ENCODE measurements at regions of chr5 and their contacts with region 1.

Region 1: GRCh38 chr5:14650052-14650451 is 14.5 kb upstream of the OTULIN start:
- DNase-seq: no peak
- H3K4me3 ChIP-seq: no peak overlapping the region
- CTCF ChIP-seq: no peak

Region 2: DNA sequence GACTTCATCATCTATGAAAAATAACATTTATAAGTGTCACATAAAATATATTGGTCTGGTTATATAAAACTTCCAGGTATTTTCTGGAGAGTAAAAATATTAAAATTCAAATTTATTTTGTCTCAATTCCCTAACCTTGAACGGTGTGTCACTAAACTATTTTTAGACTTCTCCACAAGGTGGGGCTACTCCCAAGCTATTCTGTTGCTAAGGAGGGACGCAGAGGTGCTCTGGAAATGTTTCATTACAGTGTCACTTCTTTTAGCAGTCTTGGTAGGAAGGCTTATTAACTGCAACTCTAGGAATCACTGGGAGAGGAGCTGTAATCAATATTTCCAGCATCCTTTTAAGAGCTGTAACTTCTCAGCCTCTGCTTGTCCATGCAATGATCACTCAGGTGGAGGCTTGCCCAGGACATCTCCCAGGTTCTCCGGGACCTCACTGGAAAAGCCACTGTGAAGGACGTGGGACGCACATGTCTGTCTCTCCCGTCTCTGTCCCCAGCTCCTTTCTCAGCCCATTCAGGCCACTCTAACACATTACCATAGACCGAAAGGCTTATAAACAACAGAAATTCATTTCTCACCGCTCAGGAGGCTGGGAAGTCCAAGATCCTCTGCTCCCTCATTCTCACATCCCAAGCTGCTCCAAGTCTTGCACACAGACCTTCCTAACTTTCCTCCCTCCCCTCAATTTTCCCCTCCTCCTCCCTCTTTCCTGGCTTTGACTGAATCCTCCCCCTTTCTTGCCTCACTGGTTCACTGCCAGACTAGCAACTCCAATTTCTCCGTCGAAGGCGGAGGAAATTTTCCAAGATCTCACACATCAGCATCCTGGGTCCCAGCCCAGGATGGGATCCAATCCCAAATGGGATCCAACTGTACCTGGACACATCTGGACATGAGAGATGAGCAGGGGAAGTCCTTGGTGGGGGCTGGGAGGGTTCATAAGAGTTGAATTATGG is 672.9 kb before region 1 on chr5:
- CTCF ChIA-PET with region 1: interaction called, 58 read pairs
- POLR2A ChIA-PET with region 1: no interaction called
- DNase-seq: no peak
- H3K4me3 ChIP-seq: no peak overlapping the region
- CTCF ChIP-seq: peak; percentile 40

Region 3: DNA sequence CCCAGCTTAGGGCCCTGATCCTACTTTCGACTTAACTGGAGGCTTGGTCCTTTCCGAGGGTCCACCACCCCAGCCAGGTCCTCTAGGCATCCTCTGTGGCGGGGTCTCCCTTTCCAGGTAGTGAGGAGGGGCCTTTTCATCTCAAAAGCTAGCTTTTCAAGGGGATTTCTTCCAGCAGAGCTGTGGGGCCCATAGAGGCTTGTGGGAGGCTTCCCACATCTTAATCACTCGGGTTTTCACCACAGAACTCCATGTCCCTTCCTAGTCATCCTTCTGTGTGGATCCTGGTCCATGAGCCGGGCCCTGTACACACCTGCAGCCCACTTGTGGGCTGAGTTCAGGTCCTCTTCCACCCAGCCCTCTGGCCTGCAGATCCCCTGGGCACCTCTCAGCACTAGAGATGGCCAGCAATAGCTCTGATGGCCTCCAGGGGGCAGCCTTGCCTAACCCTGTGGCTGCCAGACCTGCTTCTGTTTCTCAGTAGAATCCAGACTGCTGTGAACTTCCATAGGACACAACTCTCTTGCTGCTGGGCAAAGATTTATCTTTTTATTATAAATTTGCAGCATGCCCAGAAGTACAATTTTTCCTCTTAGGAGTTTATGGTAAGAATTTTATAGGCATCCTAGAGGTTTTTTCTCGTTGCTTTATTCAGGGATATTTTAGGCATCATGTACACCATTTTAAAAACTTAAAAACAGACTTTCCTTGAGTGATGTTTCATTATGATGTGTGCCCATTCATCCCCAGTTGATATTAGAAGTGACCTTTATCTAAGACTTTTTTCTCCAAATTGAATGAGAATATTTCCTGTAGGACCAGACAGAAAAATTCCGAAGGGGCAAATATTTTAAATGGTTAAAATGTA is 298.0 kb before region 1 on chr5:
- CTCF ChIA-PET with region 1: interaction called, 25 read pairs
- POLR2A ChIA-PET with region 1: no interaction called
- DNase-seq: no peak
- H3K4me3 ChIP-seq: no peak overlapping the region
- CTCF ChIP-seq: peak; percentile 96

Region 4: GRCh38 chr5:14357851-14358250 is 292.2 kb before region 1 on chr5:
- CTCF ChIA-PET with region 1: interaction called, 31 read pairs
- POLR2A ChIA-PET with region 1: no interaction called
- DNase-seq: no peak
- H3K4me3 ChIP-seq: no peak overlapping the region
- CTCF ChIP-seq: no peak

Region 5: DNA sequence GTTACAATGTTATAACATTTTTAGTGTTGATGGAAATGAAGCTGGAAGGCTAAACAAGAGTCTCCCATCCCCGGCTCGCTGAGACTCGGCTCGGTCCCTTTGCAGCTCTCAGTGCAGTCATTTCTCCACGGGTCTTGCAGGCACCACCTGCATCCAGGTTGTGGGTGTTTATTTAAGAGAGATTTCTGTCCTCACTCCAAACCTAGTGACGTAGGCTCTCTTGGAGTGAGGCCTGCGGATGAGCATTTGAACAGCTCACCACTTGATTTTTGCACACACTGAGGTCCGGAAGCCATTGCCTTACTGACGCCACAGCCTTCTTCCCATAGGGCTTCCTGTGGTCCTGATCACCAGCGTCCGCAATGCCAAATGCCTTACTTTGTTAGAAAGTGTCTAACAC is 266.1 kb before region 1 on chr5:
- CTCF ChIA-PET with region 1: interaction called, 27 read pairs
- POLR2A ChIA-PET with region 1: no interaction called
- DNase-seq: no peak
- H3K4me3 ChIP-seq: no peak overlapping the region
- CTCF ChIP-seq: no peak

Region 6: DNA sequence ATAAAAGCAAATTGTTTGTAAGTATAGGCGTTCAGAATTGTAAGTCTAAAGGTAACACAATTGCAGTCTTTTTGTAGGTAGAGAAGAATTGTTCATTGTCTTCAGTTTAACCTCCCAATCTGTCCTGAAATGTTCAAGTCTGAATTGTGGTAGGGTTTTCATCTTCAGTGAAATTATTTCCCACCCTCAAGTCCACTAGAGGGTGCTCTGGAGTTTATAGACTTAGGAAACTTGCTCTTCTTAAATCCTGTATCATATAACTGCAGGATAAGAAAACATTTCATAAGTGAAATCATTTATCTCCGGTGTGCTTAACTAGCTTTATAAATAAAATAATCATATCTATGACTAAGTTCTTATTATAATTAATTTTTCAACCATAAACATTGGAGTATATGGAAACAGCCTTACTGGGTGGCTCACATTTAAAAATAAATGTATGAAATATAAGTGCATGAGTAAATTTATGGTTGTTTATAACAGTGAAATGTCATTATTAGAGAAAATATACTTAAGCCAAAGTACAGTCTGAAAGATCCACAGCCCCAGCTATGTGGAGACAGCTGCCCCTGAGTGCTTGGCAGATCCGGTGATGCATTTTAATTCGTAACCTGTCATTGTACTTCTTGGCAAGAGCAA is 250.9 kb before region 1 on chr5:
- CTCF ChIA-PET with region 1: interaction called, 151 read pairs
- POLR2A ChIA-PET with region 1: no interaction called
- DNase-seq: no peak
- H3K4me3 ChIP-seq: no peak overlapping the region
- CTCF ChIP-seq: peak; percentile 30

Region 7: DNA sequence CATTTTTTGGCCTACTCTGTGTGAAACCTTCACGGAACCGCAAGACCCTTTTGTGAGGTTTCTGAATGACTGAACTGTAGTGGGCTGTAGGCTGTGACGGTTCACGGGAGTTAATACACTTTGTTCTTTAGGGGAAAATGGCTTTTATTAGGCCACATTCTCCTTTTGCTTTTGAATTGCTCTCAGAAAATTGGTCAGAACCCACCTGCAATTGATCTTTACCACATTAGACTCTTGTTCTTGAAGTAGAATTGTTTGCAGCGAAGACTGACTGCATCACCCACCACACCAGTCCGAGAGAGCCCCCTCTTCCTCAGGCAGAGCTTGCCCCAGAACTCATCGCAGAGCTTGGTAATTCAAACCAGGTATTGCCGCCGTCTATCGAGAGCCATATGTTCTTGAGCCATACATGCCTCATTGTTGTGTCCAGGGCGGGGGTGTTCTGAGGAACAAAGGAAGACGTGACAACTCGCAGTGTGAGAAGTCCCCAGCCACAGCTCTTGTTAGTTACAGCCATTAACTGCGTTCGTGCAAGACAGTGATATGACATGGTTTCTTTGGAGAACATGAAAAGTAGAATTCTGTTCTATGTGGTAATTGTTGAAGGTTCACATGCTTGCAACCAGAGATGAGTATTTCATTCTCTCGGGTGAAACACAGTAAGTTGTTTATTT is 234.9 kb before region 1 on chr5:
- CTCF ChIA-PET with region 1: interaction called, 35 read pairs
- POLR2A ChIA-PET with region 1: no interaction called
- DNase-seq: no peak
- H3K4me3 ChIP-seq: no peak overlapping the region
- CTCF ChIP-seq: no peak